Dorsolateral prefrontal cortex (tissue), 120 donors: ENCODE measurements at regions of chr16 and their contacts with region 1.

Region 1: GRCh38 chr16:67672739-67673662 is 6.4 kb downstream of the C16orf86 start:
- DNase-seq: peak in 8 of 10 donors; percentile 59 to 77 (median 72)
- H3K4me3 ChIP-seq: no peak overlapping the region
- H3K27ac ChIP-seq: peak overlapping the region in 55 of 59 donors; percentile 25 to 94 (median 69)
- H3K27me3 ChIP-seq: no peaks in the 10 kb centered on the region
- CTCF ChIP-seq: peak; percentile 29 to 83 (median 72)

Region 2: DNA sequence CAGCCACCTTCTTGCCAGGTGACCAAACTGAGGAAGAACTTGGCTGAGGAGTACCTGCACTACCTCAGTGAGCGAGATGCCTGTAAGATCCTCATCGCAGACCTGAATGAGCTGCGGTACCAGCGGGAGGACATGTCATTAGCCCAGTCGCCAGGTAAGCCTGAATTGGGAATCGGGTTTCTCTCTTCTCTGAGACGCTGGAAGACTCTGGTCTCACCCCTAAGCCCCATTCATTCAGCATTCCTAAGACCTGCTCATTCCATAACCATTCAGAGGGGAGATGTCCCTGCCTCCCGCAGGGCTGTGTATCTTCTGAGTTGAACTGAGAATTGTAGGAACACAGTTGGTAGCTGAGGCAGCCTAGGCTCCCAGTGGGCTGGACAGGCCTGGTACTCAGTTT is 152.1 kb after region 1 on chr16:
- intact Hi-C with region 1: loop called in 1 of 2 experiments (anchors 5 kb)
- DNase-seq: no peak
- H3K4me3 ChIP-seq: no peak overlapping the region
- H3K27ac ChIP-seq: no peak overlapping the region
- H3K27me3 ChIP-seq: no peaks in the 10 kb centered on the region
- CTCF ChIP-seq: no peak